ENCODE measurements at regions of chr12 and their contacts with region 1.

Region 1: DNA sequence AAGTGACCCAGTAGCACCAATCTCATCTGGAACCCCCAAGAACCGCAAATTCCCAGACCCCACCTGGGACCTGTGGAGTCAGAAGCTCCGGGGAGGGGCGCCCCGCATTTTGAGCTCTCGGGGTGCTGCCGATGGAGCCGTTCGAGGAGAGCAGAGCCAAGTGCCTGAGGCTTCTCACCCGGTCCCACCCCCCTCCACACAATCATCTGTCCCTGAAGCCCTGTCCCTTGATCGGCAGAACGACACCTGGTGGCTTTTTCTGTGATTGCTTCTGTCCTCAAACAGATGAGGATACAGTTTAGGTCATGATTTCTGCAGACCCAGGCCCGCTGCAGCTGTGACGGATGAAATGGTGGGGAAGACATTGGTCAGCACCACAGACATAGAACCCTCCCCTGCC is 74.7 kb downstream of the NOC4L start:
- DNase-seq: peak; percentile 58
- H3K4me3 Mint-ChIP-seq: no peak overlapping the region
- H3K27ac Mint-ChIP-seq: no peak overlapping the region
- H3K4me1 Mint-ChIP-seq: peaks cover 5% of the 10 kb centered on the region
- H3K27me3 Mint-ChIP-seq: peaks cover 44% of the 10 kb centered on the region

Region 2: GRCh38 chr12:132153501-132154340 is 65.2 kb before region 1 on chr12:
- CTCF ChIA-PET with region 1: interaction called, 23 read pairs
- DNase-seq: peak; percentile 84
- H3K4me3 Mint-ChIP-seq: no peak overlapping the region
- H3K27ac Mint-ChIP-seq: no peak overlapping the region
- H3K4me1 Mint-ChIP-seq: no peaks in the 10 kb centered on the region
- H3K27me3 Mint-ChIP-seq: no peaks in the 10 kb centered on the region